ENCODE measurements at regions of chr11 and their contacts with region 1.

Region 1: DNA sequence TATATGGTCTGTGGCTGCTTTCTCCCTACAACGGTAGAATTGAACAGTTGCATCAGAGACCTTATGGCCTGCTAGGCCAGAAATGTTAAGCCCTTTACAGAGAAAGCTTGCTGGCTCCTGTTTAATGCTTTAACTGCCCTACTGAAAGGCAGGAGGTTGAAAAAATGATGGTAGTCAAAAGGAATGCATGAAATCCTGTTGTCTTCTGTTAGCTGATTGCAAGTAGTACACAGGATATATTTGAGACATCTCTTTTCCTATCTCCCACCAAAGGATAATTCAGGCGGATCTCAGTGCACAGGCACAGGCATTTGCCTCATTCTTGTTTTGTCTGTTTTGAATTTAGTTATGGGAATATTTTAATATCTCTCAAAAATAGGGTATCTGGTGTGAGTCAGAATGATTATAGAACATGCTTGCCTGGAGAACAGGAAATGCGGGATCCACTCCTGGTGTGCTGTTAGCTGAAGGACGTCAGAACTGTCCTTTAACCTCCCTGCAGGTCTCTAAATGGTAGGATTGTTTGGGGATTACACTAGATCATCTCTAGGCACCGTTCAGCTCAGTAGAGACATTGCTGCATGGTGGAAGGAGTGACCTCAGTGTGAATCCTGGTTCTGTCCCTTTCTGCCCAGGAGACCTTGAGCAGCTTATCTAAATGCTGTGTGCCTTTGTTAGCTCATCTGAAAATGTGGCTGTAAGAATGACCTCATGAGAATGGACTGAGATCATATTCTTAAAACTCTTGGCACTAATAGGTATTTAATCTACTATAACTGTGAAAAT is 49.5 kb downstream of the PACS1 start:
- DNase-seq: no peak
- H3K4me3 ChIP-seq: no peak overlapping the region
- H3K27ac ChIP-seq: no peak overlapping the region
- H3K4me1 ChIP-seq: peaks cover 23 to 41% (median 29%) of the 10 kb centered on the region in 4 experiments
- H3K27me3 ChIP-seq: no peaks in the 10 kb centered on the region

Region 2: GRCh38 chr11:66136752-66137123 is 17.2 kb after region 1 on chr11:
- CTCF ChIA-PET with region 1: interaction called, 32 read pairs
- POLR2A ChIA-PET with region 1: no interaction called
- DNase-seq: no peak
- H3K4me3 ChIP-seq: no peak overlapping the region
- H3K27ac ChIP-seq: no peak overlapping the region
- H3K4me1 ChIP-seq: peaks cover 3 to 28% (median 8%) of the 10 kb centered on the region in 4 experiments
- H3K27me3 ChIP-seq: no peaks in the 10 kb centered on the region

Measured in common myeloid progenitor, CD34-positive (primary cell).